ENCODE measurements at regions of chr1 and their contacts with region 1.

Region 1: GRCh38 chr1:73820843-73821242 is 377.1 kb downstream of the LRRIQ3 start:
- DNase-seq: no peak
- ATAC-seq: no peak
- H3K4me3 ChIP-seq: no peak overlapping the region
- H3K27ac ChIP-seq: no peak overlapping the region
- H3K4me1 ChIP-seq: no peaks in the 10 kb centered on the region
- H3K27me3 ChIP-seq: no peaks in the 10 kb centered on the region
- CTCF ChIP-seq: no peak

Region 2: DNA sequence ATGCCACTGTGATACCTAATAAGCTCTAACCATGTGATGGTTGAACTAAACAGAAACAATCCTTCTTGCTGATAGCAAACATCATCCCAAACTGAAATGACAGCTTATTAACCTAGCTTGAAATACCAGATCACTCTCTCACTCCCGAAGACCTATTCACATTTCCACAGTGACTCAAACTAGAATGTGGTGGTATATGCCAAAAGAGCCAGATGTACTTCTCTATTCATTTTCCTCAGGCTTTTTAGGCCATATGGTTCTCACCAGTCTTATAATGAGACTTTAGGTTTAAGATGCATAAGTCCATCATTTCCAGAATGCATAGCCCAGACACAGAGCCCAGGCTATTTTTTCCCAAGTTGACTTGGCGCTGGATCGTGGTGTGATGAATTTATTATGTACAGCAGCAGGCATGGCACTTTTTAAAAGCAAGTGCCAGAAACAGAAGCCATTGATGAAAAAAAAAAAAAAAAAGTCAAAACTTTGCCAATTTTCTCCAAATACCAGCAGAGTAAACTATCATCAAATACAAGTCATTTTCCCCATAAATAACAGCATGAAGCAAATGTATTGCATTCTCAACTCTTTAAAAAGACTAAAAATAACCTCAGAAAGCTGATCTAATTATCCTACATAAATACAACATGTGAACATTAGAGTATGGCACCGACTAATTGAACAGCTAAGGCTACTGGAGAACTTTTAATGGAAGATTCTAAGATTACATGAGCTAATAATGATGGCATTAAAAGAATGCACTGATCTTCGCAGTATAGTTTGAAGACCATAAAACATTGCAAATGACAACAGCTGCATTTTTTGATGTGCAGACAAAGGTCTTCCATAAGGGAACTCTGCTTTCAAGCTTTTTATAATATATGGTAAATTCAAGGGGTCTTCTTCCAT is 11.7 kb after region 1 on chr1:
- intact Hi-C with region 1: loop called in 1 of 10 experiments (anchors 1 kb)
- DNase-seq: no peak
- ATAC-seq: no peak
- H3K4me3 ChIP-seq: no peak overlapping the region
- H3K27ac ChIP-seq: no peak overlapping the region
- H3K4me1 ChIP-seq: no peaks in the 10 kb centered on the region
- H3K27me3 ChIP-seq: no peaks in the 10 kb centered on the region
- CTCF ChIP-seq: no peak

Region 3: DNA sequence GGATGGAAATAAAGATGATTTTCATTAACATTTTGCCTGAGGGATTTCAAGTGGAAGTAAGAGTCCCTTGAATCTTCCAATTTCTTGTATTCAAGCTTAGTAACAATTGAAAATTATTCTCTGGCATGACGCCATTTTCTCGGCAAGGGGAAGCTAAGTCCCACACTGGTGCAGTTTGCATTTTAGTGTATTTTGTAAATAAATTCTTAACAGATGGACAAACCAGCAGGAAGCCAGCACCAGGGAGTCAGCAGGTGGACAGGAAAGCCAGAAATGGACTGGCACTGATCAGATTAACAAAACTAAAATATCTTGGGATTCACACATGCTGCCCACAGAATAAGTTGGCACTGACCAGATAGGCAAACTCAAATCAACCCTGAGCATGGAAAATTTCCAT is 65.9 kb after region 1 on chr1:
- intact Hi-C with region 1: no loop called
- DNase-seq: no peak
- ATAC-seq: no peak
- H3K4me3 ChIP-seq: no peak overlapping the region
- H3K27ac ChIP-seq: no peak overlapping the region
- H3K4me1 ChIP-seq: peaks cover 0 to 3% (median 0%) of the 10 kb centered on the region in 9 donors
- H3K27me3 ChIP-seq: no peaks in the 10 kb centered on the region
- CTCF ChIP-seq: no peak

Region 4: GRCh38 chr1:73980324-73981040 is 159.6 kb after region 1 on chr1:
- intact Hi-C with region 1: no loop called
- DNase-seq: no peak
- ATAC-seq: peak in 3 of 8 donors; percentile 46 to 88 (median 46)
- H3K4me3 ChIP-seq: no peak overlapping the region
- H3K27ac ChIP-seq: peak overlapping the region in 2 of 10 donors; percentile 14 to 33
- H3K4me1 ChIP-seq: peaks cover 0 to 15% (median 3%) of the 10 kb centered on the region in 9 donors
- H3K27me3 ChIP-seq: no peaks in the 10 kb centered on the region
- CTCF ChIP-seq: no peak

Measured in heart right ventricle (tissue), 16 donors.